IMR-90 (cell line): ENCODE measurements at regions of chr13 and their contacts with region 1.

Region 1: GRCh38 chr13:77580748-77581147 is 45.2 kb downstream of the SCEL start:
- DNase-seq: no peak
- ATAC-seq: no peak
- H3K4me3 ChIP-seq: no peak overlapping the region
- H3K27ac ChIP-seq: no peak overlapping the region
- H3K4me1 ChIP-seq: no peaks in the 10 kb centered on the region
- H3K27me3 ChIP-seq: no peaks in the 10 kb centered on the region
- CTCF ChIP-seq: no peak
- POLR2A ChIP-seq: no peak
- RAD21 ChIP-seq: no peak

Region 2: GRCh38 chr13:76754414-76754813 is 826.3 kb before region 1 on chr13:
- CTCF ChIA-PET with region 1: no interaction called
- POLR2A ChIA-PET with region 1: no interaction called
- dilution Hi-C with region 1: no loop called
- in situ Hi-C with region 1: no loop called
- intact Hi-C with region 1: no loop called
- DNase-seq: peak; percentile 60
- ATAC-seq: no peak
- H3K4me3 ChIP-seq: no peak overlapping the region
- H3K27ac ChIP-seq: no peak overlapping the region
- H3K4me1 ChIP-seq: no peaks in the 10 kb centered on the region; the same call in 1 of the 2 replicates
- H3K27me3 ChIP-seq: no peaks in the 10 kb centered on the region; the same call in 1 of the 2 replicates
- CTCF ChIP-seq: no peak
- POLR2A ChIP-seq: no peak
- RAD21 ChIP-seq: no peak

Region 3: GRCh38 chr13:77267362-77267761 is 313.4 kb before region 1 on chr13:
- CTCF ChIA-PET with region 1: no interaction called
- POLR2A ChIA-PET with region 1: interaction called, 10 read pairs
- dilution Hi-C with region 1: no loop called
- in situ Hi-C with region 1: no loop called
- intact Hi-C with region 1: no loop called
- DNase-seq: peak; percentile 34
- ATAC-seq: peak; percentile 53
- H3K4me3 ChIP-seq: no peak overlapping the region
- H3K27ac ChIP-seq: no peak overlapping the region
- H3K4me1 ChIP-seq: no peaks in the 10 kb centered on the region
- H3K27me3 ChIP-seq: no peaks in the 10 kb centered on the region
- CTCF ChIP-seq: no peak
- POLR2A ChIP-seq: no peak
- RAD21 ChIP-seq: no peak

Region 4: GRCh38 chr13:77565635-77566034 is 15.1 kb before region 1 on chr13:
- CTCF ChIA-PET with region 1: no interaction called
- POLR2A ChIA-PET with region 1: no interaction called
- dilution Hi-C with region 1: no loop called
- in situ Hi-C with region 1: no loop called
- intact Hi-C with region 1: no loop called
- DNase-seq: peak; percentile 9
- ATAC-seq: no peak
- H3K4me3 ChIP-seq: no peak overlapping the region
- H3K27ac ChIP-seq: no peak overlapping the region
- H3K4me1 ChIP-seq: no peaks in the 10 kb centered on the region
- H3K27me3 ChIP-seq: no peaks in the 10 kb centered on the region
- CTCF ChIP-seq: peak; percentile 36
- POLR2A ChIP-seq: no peak
- RAD21 ChIP-seq: peak; percentile 50